ENCODE measurements at regions of chr18 and their contacts with region 1.

Region 1: GRCh38 chr18:31267823-31268481 is 50.0 kb upstream of the DSG1 start:
- DNase-seq: no peak
- ATAC-seq: no peak
- H3K4me3 ChIP-seq: no peak overlapping the region
- H3K27ac ChIP-seq: no peak overlapping the region
- H3K4me1 ChIP-seq: no peaks in the 10 kb centered on the region
- H3K27me3 ChIP-seq: no peaks in the 10 kb centered on the region

Region 2: DNA sequence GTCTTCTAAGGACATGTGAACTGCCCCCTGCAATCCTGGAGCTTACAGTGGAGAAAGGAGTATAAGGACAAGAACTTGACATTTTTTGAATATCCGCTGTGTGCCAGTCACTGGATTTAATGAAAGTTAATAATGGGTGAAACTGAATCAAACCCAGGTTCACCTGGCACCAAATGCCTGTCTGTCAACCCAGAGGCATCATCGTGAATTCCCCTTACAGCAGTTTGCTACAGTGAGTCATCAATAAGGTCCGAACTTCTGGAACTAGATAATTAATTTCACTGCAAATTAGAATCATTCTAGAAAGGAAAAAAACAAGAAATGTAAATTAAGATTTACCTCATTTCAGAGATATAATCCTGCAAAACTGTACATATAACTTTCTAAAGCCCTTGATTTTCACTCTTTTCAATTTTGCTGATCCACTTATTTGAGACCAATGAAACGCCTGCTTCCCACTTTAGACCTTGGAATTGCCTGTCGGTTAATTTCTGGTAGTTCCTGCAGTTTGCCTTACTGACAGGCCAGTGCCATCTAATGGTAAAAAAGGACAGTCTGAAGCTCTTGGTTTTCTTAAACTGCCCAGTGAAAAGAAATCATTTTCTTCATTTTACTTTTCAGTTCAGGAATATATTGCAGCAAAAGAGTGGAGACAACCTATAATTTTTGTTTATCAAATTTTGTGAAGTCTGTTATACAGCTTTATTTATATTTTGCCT is 238.2 kb after region 1 on chr18:
- intact Hi-C with region 1: loop called in 1 of 4 experiments (anchors 10 kb)
- DNase-seq: no peak
- ATAC-seq: peak; percentile 50 to 76
- H3K4me3 ChIP-seq: no peak overlapping the region
- H3K27ac ChIP-seq: no peak overlapping the region
- H3K4me1 ChIP-seq: peaks cover 9% of the 10 kb centered on the region
- H3K27me3 ChIP-seq: no peaks in the 10 kb centered on the region